T-cell (primary cell): ENCODE measurements at regions of chr14 and their contacts with region 1.

Region 1: GRCh38 chr14:63467440-63468072 is 75.6 kb downstream of the PPP2R5E start:
- DNase-seq: no peak
- ATAC-seq: no peak
- H3K4me3 ChIP-seq: no peak overlapping the region
- H3K4me3 Mint-ChIP-seq: no peak overlapping the region
- H3K27ac ChIP-seq: no peak overlapping the region
- H3K27ac Mint-ChIP-seq: no peak overlapping the region
- H3K4me1 ChIP-seq: peaks cover 6 to 8% of the 10 kb centered on the region in 2 experiments
- H3K4me1 Mint-ChIP-seq: peaks cover 50 to 53% (median 50%) of the 10 kb centered on the region in 3 donors
- H3K27me3 ChIP-seq: no peaks in the 10 kb centered on the region
- H3K27me3 Mint-ChIP-seq: no peaks in the 10 kb centered on the region

Region 2: GRCh38 chr14:63493246-63493645 is 25.7 kb after region 1 on chr14:
- CTCF ChIA-PET with region 1: no interaction called
- POLR2A ChIA-PET with region 1: interaction called in 1 of 2 experiments, 15 read pairs
- DNase-seq: no peak
- ATAC-seq: no peak
- H3K4me3 ChIP-seq: no peak overlapping the region
- H3K4me3 Mint-ChIP-seq: no peak overlapping the region
- H3K27ac ChIP-seq: no peak overlapping the region
- H3K27ac Mint-ChIP-seq: no peak overlapping the region
- H3K4me1 ChIP-seq: peaks cover 0 to 3% of the 10 kb centered on the region in 2 experiments
- H3K4me1 Mint-ChIP-seq: peaks cover 39 to 45% (median 40%) of the 10 kb centered on the region in 3 donors
- H3K27me3 ChIP-seq: no peaks in the 10 kb centered on the region
- H3K27me3 Mint-ChIP-seq: no peaks in the 10 kb centered on the region